AG04450 (cell line): ENCODE measurements at regions of chr2 and their contacts with region 1.

Region 1: GRCh38 chr2:222915092-222915957 is 54.5 kb downstream of the ACSL3 start:
- DNase-seq: no peak
- H3K4me3 ChIP-seq: no peak overlapping the region
- H3K27ac ChIP-seq: no peak overlapping the region
- H3K27me3 ChIP-seq: no peaks in the 10 kb centered on the region
- CTCF ChIP-seq: peak; percentile 61

Region 2: GRCh38 chr2:222903234-222904220 is 11.8 kb before region 1 on chr2:
- CTCF ChIA-PET with region 1: interaction called, 30 read pairs
- POLR2A ChIA-PET with region 1: no interaction called
- DNase-seq: no peak
- H3K4me3 ChIP-seq: no peak overlapping the region
- H3K27ac ChIP-seq: peak overlapping the region; percentile 77
- H3K27me3 ChIP-seq: no peaks in the 10 kb centered on the region
- CTCF ChIP-seq: peak; percentile 67

Region 3: GRCh38 chr2:222959336-222959735 is 44.0 kb after region 1 on chr2:
- CTCF ChIA-PET with region 1: interaction called, 15 read pairs
- POLR2A ChIA-PET with region 1: no interaction called
- DNase-seq: peak; percentile 72
- H3K4me3 ChIP-seq: no peak overlapping the region
- H3K27ac ChIP-seq: peak overlapping the region; percentile 52
- H3K27me3 ChIP-seq: no peaks in the 10 kb centered on the region
- CTCF ChIP-seq: peak; percentile 55